Heart right ventricle (tissue), 16 donors: ENCODE measurements at regions of chr1 and their contacts with region 1.

Region 1: GRCh38 chr1:170351366-170351946 is 180.5 kb upstream of the GORAB start:
- DNase-seq: no peak
- ATAC-seq: peak in 4 of 8 donors; percentile 3 to 45 (median 24)
- H3K4me3 ChIP-seq: no peak overlapping the region
- H3K27ac ChIP-seq: peak overlapping the region in 6 of 10 donors; percentile 2 to 59 (median 31)
- H3K4me1 ChIP-seq: peaks cover 0 to 41% (median 22%) of the 10 kb centered on the region in 9 donors
- H3K27me3 ChIP-seq: no peaks in the 10 kb centered on the region
- CTCF ChIP-seq: no peak

Region 2: DNA sequence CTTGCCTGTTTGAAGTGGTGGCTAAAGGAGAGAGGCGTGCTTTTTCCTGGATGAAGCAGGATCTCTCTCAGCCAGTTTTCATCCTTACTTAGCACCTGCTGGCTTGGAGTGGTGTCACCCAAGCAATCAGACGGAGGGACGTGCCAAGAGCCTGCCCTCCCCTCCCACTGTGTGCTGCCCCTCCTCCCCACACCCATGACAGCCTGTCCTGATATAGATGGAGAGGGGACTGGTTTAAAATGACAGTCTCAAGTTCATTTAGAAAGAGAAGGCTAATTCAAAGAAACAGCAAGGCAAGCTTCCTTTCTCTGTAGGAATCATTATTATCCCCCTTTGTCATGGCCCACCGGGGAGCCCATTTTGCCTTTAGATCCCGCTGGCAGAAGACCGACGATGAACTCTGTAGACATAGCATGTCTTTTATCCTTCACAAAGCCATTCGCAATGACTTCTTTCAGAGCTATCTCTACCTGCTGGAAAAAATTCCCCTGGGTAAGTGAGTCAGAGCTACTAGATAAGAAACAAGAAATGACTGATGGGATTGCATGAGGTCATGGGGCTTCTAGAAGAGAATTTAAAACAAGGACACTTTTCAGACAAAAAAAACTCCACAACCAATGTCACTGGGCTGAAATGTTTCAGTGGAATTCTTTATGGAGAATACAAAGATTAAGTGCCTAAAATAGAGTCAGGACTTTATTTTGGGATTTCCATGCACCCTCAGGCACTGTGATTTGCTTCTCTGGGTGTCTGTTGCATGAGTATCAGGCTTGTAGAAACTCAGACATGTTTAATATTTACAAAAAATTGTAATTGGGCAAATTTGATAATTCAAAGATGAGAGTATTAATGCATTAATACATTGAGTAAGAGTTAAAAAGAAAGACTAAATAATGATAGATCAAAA is 205.4 kb before region 1 on chr1 and contains the start of gene NTMT2:
- intact Hi-C with region 1: loop called in 1 of 10 experiments (anchors 10 kb)
- DNase-seq: peak; percentile 61 to 63
- ATAC-seq: peak; percentile 88 to 97 (median 96)
- H3K4me3 ChIP-seq: peak within 1 kb of the TSS in 8 of 10 donors; percentile 6 to 42 (median 32)
- H3K27ac ChIP-seq: peak within 1 kb of the TSS; percentile 61 to 95 (median 82)
- H3K4me1 ChIP-seq: peaks cover 0 to 25% (median 12%) of the 10 kb centered on the region in 9 donors
- H3K27me3 ChIP-seq: no peaks in the 10 kb centered on the region
- CTCF ChIP-seq: no peak
- total RNA-seq, gene NTMT2: 0.92 to 3.2 (median 2.7) TPM

Region 3: DNA sequence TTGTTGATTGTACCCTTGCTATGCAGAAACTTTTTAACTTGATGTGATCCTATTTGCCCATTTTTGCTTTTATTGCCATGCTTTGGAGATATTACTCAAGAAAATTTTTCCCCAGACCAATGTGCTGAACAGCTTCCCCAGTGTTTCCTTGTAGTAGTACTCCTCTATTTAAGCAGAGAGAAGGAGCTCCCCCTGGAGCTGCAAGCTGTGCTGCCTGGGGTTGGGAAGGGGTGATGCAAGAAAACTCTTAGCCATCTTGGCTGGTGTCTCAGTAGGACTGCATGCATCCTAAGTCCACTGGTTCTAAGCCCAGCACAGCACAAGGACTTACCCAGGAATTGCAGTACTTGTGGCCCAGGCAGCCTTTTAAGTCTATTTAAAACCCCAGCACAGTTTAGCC is 84.1 kb before region 1 on chr1:
- intact Hi-C with region 1: no loop called
- DNase-seq: no peak
- ATAC-seq: no peak
- H3K4me3 ChIP-seq: no peak overlapping the region
- H3K27ac ChIP-seq: no peak overlapping the region
- H3K4me1 ChIP-seq: peaks cover 0 to 17% (median 4%) of the 10 kb centered on the region in 9 donors
- H3K27me3 ChIP-seq: no peaks in the 10 kb centered on the region
- CTCF ChIP-seq: peak in 2 of 9 donors; percentile 10 to 12

Region 4: DNA sequence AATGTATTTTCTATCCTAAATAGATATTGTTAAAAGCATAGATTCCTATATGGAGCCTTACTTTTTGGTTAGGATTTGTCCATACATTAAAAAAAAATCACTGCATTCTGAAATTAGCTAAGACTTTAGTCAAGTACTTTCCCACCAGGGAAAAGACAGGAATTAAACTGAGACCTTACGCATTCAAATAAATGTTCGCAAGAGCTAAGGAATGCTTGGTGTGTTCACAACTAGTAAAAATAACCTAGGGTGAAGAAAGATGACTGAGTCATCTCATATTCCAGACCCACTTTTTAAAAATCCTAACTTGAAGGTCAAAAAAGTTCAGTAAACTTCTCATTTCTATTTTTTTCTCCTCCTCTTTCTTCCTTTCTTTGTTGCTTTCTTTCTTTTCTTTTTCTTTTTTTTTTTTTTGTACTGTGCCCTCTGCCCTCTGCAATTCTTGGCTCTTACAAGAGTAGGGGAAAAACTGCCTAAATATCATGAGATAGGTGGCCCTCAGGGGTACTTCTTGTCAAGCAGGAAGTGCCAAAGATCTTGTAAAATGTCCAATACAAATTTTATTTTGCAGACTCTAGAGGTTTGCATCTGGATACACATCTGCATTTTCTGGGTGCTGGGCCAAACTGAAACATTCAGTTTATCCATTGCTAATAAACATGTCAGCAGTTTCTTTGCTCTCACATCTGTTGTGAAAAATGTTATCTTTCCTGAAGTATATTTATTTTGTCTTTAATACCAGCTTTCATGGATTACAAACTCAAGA is 59.1 kb after region 1 on chr1:
- intact Hi-C with region 1: loop called in 2 of 10 experiments (anchors 2 to 5 kb)
- DNase-seq: no peak
- ATAC-seq: peak in 7 of 8 donors; percentile 73 to 94 (median 86)
- H3K4me3 ChIP-seq: no peak overlapping the region
- H3K27ac ChIP-seq: peak overlapping the region in 7 of 10 donors; percentile 53 to 80 (median 65)
- H3K4me1 ChIP-seq: peaks cover 0 to 40% (median 21%) of the 10 kb centered on the region in 9 donors
- H3K27me3 ChIP-seq: no peaks in the 10 kb centered on the region
- CTCF ChIP-seq: no peak